HepG2 (cell line): ENCODE measurements at regions of chr1 and their contacts with region 1.

Region 1: GRCh38 chr1:36486436-36487335 is 4.0 kb upstream of the CSF3R start:
- DNase-seq: peak; percentile 98
- ATAC-seq: peak; percentile 92
- H3K4me3 ChIP-seq: peak overlapping the region; percentile 24 to 61 (median 33); a peak in 5 of 6 replicates
- H3K27ac ChIP-seq: peak overlapping the region; percentile 88
- H3K4me1 ChIP-seq: peaks cover 77% of the 10 kb centered on the region
- H3K27me3 ChIP-seq: no peaks in the 10 kb centered on the region; a peak in 1 of 5 replicates
- CTCF ChIP-seq: no peak
- EP300 ChIP-seq: peak; percentile 97 to 98
- POLR2A ChIP-seq: peak; percentile 50 to 78; a peak in 3 of 4 replicates
- RAD21 ChIP-seq: no peak

Region 2: GRCh38 chr1:36450270-36450918 is 36.3 kb before region 1 on chr1 and contains the start of gene OSCP1:
- CTCF ChIA-PET with region 1: no interaction called
- POLR2A ChIA-PET with region 1: interaction called, 10 read pairs
- in situ Hi-C with region 1: no loop called
- intact Hi-C with region 1: no loop called
- DNase-seq: peak; percentile 79
- ATAC-seq: peak; percentile 95
- H3K4me3 ChIP-seq: peak within 1 kb of the TSS; percentile 42 to 68 (median 65); a peak in 5 of 6 replicates
- H3K27ac ChIP-seq: peak within 1 kb of the TSS; percentile 67
- H3K4me1 ChIP-seq: 0 out of 2 replicates have a peak, but pooled peaks cover 7% of the 10 kb centered on the region
- H3K27me3 ChIP-seq: no peaks in the 10 kb centered on the region
- CTCF ChIP-seq: no peak
- EP300 ChIP-seq: no peak
- POLR2A ChIP-seq: peak in 1 of 2 experiments; percentile 65; a peak in 2 of 4 replicates
- RAD21 ChIP-seq: no peak
- total RNA-seq, gene OSCP1: 0.60 and 0.86 TPM in 2 replicates

Region 3: GRCh38 chr1:36463803-36464604 is 22.7 kb before region 1 on chr1 and contains the start of gene MRPS15:
- CTCF ChIA-PET with region 1: no interaction called
- POLR2A ChIA-PET with region 1: interaction called, 48 read pairs
- in situ Hi-C with region 1: no loop called
- intact Hi-C with region 1: loop called (anchors 2 kb)
- DNase-seq: peak; percentile 90
- ATAC-seq: peak; percentile 86
- H3K4me3 ChIP-seq: peak within 1 kb of the TSS; percentile 83 to 91 (median 90)
- H3K27ac ChIP-seq: peak within 1 kb of the TSS; percentile 93
- H3K4me1 ChIP-seq: peaks cover 55% of the 10 kb centered on the region
- H3K27me3 ChIP-seq: no peaks in the 10 kb centered on the region; a peak in 1 of 5 replicates
- CTCF ChIP-seq: no peak
- EP300 ChIP-seq: peak; percentile 80 to 94
- POLR2A ChIP-seq: peak; percentile 95 to 97
- RAD21 ChIP-seq: peak; percentile 26; the same call in 1 of the 2 replicates
- total RNA-seq, gene MRPS15: 113 and 137 TPM in 2 replicates

Region 4: DNA sequence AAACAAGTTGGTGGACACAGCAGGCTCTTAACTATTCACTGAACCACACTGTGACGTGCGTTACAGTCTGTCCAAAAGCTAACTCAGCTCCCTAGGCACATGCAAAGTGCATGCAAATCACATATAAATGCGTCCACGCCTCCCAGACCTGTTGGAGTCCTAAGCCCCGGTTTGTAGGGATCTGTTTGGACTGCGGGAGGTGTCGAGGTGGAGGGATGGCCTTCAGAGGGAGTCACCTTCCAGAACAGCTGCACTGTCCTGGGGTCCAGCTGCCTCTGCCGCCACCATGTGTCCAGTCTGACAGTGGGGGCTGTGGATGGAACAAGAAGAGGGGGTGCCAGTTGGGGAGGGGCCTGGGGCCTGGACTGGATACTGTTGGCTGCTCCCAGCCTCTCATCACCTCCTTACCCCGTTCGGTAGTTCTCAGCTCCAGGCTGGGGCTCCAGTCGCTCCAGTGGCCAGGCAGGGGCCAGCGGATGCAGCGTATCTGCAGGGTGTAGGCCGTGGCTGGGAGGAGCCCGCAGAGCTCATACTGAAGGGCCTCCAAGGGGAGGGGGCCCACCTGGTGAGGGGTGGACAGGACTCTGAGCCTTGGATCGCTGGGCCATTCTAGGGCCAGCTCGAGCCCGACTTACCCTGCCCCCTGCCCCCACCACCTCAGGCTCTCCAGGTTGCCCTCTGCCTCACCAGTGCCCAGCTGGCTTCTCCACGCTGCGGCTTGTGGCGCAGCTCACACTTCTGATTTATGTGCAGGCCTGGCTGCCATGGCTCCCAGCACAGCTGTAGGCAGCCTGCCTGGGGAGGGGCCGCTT is 14.7 kb before region 1 on chr1:
- CTCF ChIA-PET with region 1: no interaction called
- POLR2A ChIA-PET with region 1: interaction called, 21 read pairs
- in situ Hi-C with region 1: no loop called
- intact Hi-C with region 1: no loop called
- DNase-seq: no peak
- ATAC-seq: peak; percentile 83
- H3K4me3 ChIP-seq: peak overlapping the region in 2 of 3 experiments; percentile 41 to 62; a peak in 3 of 6 replicates
- H3K27ac ChIP-seq: peak overlapping the region; percentile 35
- H3K4me1 ChIP-seq: peaks cover 37% of the 10 kb centered on the region
- H3K27me3 ChIP-seq: no peaks in the 10 kb centered on the region
- CTCF ChIP-seq: peak; percentile 67
- EP300 ChIP-seq: no peak
- POLR2A ChIP-seq: 0 out of 4 replicates have a peak, but pooled peaks of 1 of the 2 experiments have one; percentile 17
- RAD21 ChIP-seq: no peak

Region 5: GRCh38 chr1:36625935-36626310 is 139.2 kb after region 1 on chr1:
- CTCF ChIA-PET with region 1: no interaction called
- POLR2A ChIA-PET with region 1: no interaction called
- in situ Hi-C with region 1: no loop called
- intact Hi-C with region 1: no loop called
- DNase-seq: no peak
- ATAC-seq: no peak
- H3K4me3 ChIP-seq: no peak overlapping the region
- H3K27ac ChIP-seq: no peak overlapping the region
- H3K4me1 ChIP-seq: no peaks in the 10 kb centered on the region
- H3K27me3 ChIP-seq: no peaks in the 10 kb centered on the region; a peak in 1 of 5 replicates
- CTCF ChIP-seq: no peak
- EP300 ChIP-seq: no peak
- POLR2A ChIP-seq: no peak
- RAD21 ChIP-seq: no peak